Tibial artery (tissue), 4 donors: ENCODE measurements at regions of chr10 and their contacts with region 1.

Region 1: DNA sequence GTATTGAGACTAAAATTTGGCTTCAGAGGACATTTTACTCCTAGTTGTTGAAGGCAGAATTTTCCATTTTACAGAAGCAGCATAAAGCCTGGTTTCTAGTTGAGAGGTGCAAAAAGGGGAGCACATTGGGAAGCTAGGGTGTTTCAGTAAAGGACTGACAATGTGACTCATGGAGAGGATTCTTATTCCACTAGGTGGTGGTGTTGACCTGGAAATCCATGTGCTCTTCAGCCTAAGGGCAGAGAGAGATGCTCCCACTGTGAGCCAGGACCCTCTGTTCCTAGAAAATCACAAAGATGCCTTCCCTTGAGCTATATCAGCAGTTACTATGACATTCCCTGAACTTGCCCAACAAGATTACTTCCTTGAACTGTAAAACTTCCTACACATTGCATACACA is 687.8 kb downstream of the IPMK start:
- DNase-seq: no peak
- H3K4me3 ChIP-seq: no peak overlapping the region
- H3K27ac ChIP-seq: no peak overlapping the region
- H3K4me1 ChIP-seq: no peaks in the 10 kb centered on the region
- H3K27me3 ChIP-seq: no peaks in the 10 kb centered on the region
- CTCF ChIP-seq: peak; percentile 42 to 48

Region 2: GRCh38 chr10:57692255-57692980 is 112.5 kb after region 1 on chr10:
- intact Hi-C with region 1: no loop called
- DNase-seq: no peak
- H3K4me3 ChIP-seq: no peak overlapping the region
- H3K27ac ChIP-seq: peak overlapping the region; percentile 6 to 50
- H3K4me1 ChIP-seq: peaks cover 0 to 50% (median 13%) of the 10 kb centered on the region in 4 donors
- H3K27me3 ChIP-seq: no peaks in the 10 kb centered on the region
- CTCF ChIP-seq: no peak

Region 3: GRCh38 chr10:57849691-57850357 is 269.9 kb after region 1 on chr10:
- intact Hi-C with region 1: loop called (anchors 5 kb)
- DNase-seq: no peak
- H3K4me3 ChIP-seq: no peak overlapping the region
- H3K27ac ChIP-seq: no peak overlapping the region
- H3K4me1 ChIP-seq: no peaks in the 10 kb centered on the region
- H3K27me3 ChIP-seq: no peaks in the 10 kb centered on the region
- CTCF ChIP-seq: peak; percentile 45 to 58

Region 4: GRCh38 chr10:58044072-58044471 is 464.1 kb after region 1 on chr10:
- intact Hi-C with region 1: loop called (anchors 10 kb)
- DNase-seq: no peak
- H3K4me3 ChIP-seq: no peak overlapping the region
- H3K27ac ChIP-seq: no peak overlapping the region
- H3K4me1 ChIP-seq: no peaks in the 10 kb centered on the region
- H3K27me3 ChIP-seq: no peaks in the 10 kb centered on the region
- CTCF ChIP-seq: no peak